CD4-positive, alpha-beta T cell (primary cell): ENCODE measurements at regions of chr3 and their contacts with region 1.

Region 1: DNA sequence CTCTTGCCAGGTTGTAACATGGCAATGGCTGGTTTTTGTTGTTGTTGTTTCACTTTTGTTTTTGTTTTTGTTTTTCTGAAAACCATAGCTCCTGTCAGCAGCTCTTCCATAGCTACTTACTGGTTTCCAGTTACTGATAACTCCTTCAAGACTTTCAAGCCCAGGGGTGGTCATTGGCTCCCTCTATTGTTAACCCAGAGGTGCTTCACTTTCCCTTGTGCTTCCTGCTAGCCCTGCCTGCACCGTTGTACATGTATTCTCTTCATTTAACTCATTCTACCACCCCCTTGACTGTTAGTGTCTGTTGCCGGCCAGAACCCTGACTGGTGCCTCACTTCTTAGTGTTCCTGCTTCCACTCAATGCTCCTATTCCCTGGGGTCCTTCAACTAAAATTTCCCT is 4.2 kb upstream of the TRAT1 start:
- DNase-seq: peak; percentile 31 to 87 (median 54)
- ATAC-seq: peak; percentile 92
- H3K4me3 ChIP-seq: no peak overlapping the region
- H3K4me3 Mint-ChIP-seq: peak overlapping the region; percentile 8
- H3K27ac ChIP-seq: no peak overlapping the region
- H3K27ac Mint-ChIP-seq: peak overlapping the region; percentile 29
- H3K4me1 ChIP-seq: peaks cover 22% of the 10 kb centered on the region
- H3K4me1 Mint-ChIP-seq: peaks cover 26% of the 10 kb centered on the region
- H3K27me3 ChIP-seq: no peaks in the 10 kb centered on the region
- H3K27me3 Mint-ChIP-seq: no peaks in the 10 kb centered on the region
- CTCF ChIP-seq: peak; percentile 80

Region 2: GRCh38 chr3:108662130-108662738 is 156.2 kb before region 1 on chr3:
- CTCF ChIA-PET with region 1: interaction called, 7 read pairs
- POLR2A ChIA-PET with region 1: interaction called, 5 read pairs
- intact Hi-C with region 1: loop called (anchors 1 kb)
- DNase-seq: peak in 11 of 14 experiments; percentile 5 to 87 (median 40)
- ATAC-seq: peak; percentile 81
- H3K4me3 ChIP-seq: no peak overlapping the region
- H3K4me3 Mint-ChIP-seq: no peak overlapping the region
- H3K27ac ChIP-seq: no peak overlapping the region
- H3K27ac Mint-ChIP-seq: no peak overlapping the region
- H3K4me1 ChIP-seq: no peaks in the 10 kb centered on the region
- H3K4me1 Mint-ChIP-seq: peaks cover 20% of the 10 kb centered on the region
- H3K27me3 ChIP-seq: no peaks in the 10 kb centered on the region
- H3K27me3 Mint-ChIP-seq: no peaks in the 10 kb centered on the region
- CTCF ChIP-seq: peak; percentile 90

Region 3: GRCh38 chr3:108806316-108806715 is 12.1 kb before region 1 on chr3:
- CTCF ChIA-PET with region 1: interaction called, 4 read pairs
- POLR2A ChIA-PET with region 1: interaction called, 18 read pairs
- intact Hi-C with region 1: loop called in 1 of 2 experiments (anchors 1 kb)
- DNase-seq: peak in 6 of 14 experiments; percentile 3 to 93 (median 60)
- ATAC-seq: peak; percentile 95
- H3K4me3 ChIP-seq: no peak overlapping the region
- H3K4me3 Mint-ChIP-seq: peak overlapping the region; percentile 2
- H3K27ac ChIP-seq: no peak overlapping the region
- H3K27ac Mint-ChIP-seq: peak overlapping the region; percentile 76
- H3K4me1 ChIP-seq: peaks cover 8% of the 10 kb centered on the region
- H3K4me1 Mint-ChIP-seq: peaks cover 33% of the 10 kb centered on the region
- H3K27me3 ChIP-seq: no peaks in the 10 kb centered on the region
- H3K27me3 Mint-ChIP-seq: no peaks in the 10 kb centered on the region
- CTCF ChIP-seq: no peak

Region 4: GRCh38 chr3:108862865-108863798 is 44.7 kb after region 1 on chr3:
- CTCF ChIA-PET with region 1: interaction called, 6 read pairs
- POLR2A ChIA-PET with region 1: no interaction called
- intact Hi-C with region 1: loop called in 1 of 2 experiments (anchors 5 kb)
- DNase-seq: peak in 6 of 14 experiments; percentile 13 to 76 (median 45)
- ATAC-seq: peak; percentile 68
- H3K4me3 ChIP-seq: no peak overlapping the region
- H3K4me3 Mint-ChIP-seq: peak overlapping the region; percentile 35
- H3K27ac ChIP-seq: peak overlapping the region; percentile 30 to 42
- H3K27ac Mint-ChIP-seq: peak overlapping the region; percentile 83
- H3K4me1 ChIP-seq: peaks cover 18% of the 10 kb centered on the region
- H3K4me1 Mint-ChIP-seq: peaks cover 44% of the 10 kb centered on the region
- H3K27me3 ChIP-seq: no peaks in the 10 kb centered on the region
- H3K27me3 Mint-ChIP-seq: no peaks in the 10 kb centered on the region
- CTCF ChIP-seq: no peak

Region 5: GRCh38 chr3:109050591-109051167 is 232.3 kb after region 1 on chr3:
- CTCF ChIA-PET with region 1: no interaction called
- POLR2A ChIA-PET with region 1: no interaction called
- intact Hi-C with region 1: no loop called
- DNase-seq: peak in 3 of 14 experiments; percentile 27 to 53 (median 41)
- ATAC-seq: no peak
- H3K4me3 ChIP-seq: no peak overlapping the region
- H3K4me3 Mint-ChIP-seq: no peak overlapping the region
- H3K27ac ChIP-seq: no peak overlapping the region
- H3K27ac Mint-ChIP-seq: no peak overlapping the region
- H3K4me1 ChIP-seq: no peaks in the 10 kb centered on the region
- H3K4me1 Mint-ChIP-seq: no peaks in the 10 kb centered on the region
- H3K27me3 ChIP-seq: no peaks in the 10 kb centered on the region
- H3K27me3 Mint-ChIP-seq: no peaks in the 10 kb centered on the region
- CTCF ChIP-seq: peak; percentile 58